ENCODE measurements at regions of chr11 and their contacts with region 1.

Region 1: GRCh38 chr11:29328961-29329441 is 687.8 kb downstream of the KCNA4 start:
- DNase-seq: peak; percentile 75
- H3K4me3 ChIP-seq: no peak overlapping the region
- H3K27ac ChIP-seq: no peak overlapping the region
- H3K4me1 ChIP-seq: peaks cover 7% of the 10 kb centered on the region
- H3K27me3 ChIP-seq: no peaks in the 10 kb centered on the region
- CTCF ChIP-seq: peak; percentile 63 to 66
- POLR2A ChIP-seq: no peak

Region 2: GRCh38 chr11:29272019-29272654 is 56.9 kb before region 1 on chr11:
- CTCF ChIA-PET with region 1: interaction called, 54 read pairs
- POLR2A ChIA-PET with region 1: no interaction called
- dilution Hi-C with region 1: no loop called
- intact Hi-C with region 1: loop called (anchors 1 kb)
- DNase-seq: peak; percentile 59
- H3K4me3 ChIP-seq: no peak overlapping the region
- H3K27ac ChIP-seq: no peak overlapping the region
- H3K4me1 ChIP-seq: no peaks in the 10 kb centered on the region
- H3K27me3 ChIP-seq: no peaks in the 10 kb centered on the region
- CTCF ChIP-seq: peak in 1 of 2 donors; percentile 54
- POLR2A ChIP-seq: no peak

Region 3: DNA sequence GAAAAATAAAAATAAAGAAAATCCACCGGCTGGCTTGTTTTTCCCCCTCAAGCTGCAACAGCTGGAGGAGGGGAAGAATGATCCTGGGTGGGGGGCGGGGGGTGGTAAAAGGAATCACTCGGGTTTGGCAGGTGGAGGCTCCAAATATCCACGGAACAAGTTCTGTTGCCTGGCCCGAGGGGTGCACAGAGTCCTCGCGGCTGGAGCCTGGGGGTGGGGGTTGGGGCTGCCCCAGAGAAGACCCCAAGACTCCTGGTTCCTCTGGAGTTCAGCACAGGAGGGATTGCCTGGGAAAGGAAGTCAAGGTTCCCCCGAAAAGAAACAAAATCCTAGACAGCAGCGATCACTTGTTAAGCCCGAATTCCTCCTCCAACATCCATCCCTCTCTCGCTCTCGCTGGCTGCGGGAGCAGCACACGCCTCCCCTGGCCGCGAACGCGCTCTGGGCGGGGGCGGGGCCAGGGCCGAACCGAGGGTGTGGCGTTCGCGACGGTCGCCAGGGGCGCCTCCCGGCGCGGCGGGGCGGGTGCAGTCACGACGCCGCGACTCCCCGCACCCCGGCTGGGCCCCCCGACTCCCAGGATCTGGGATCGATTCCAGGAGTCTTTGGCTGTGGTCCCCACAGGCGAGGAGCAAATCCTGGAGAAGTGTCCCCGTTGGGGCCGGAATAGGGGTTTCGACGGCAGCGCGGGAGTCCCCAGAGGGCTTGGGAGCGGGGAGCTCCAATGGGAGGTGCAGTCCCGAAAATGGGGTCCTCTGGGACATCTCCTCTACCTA is 687.8 kb after region 1 on chr11 and contains the start of gene KCNA4:
- CTCF ChIA-PET with region 1: no interaction called
- POLR2A ChIA-PET with region 1: no interaction called
- dilution Hi-C with region 1: no loop called
- intact Hi-C with region 1: no loop called
- DNase-seq: no peak
- H3K4me3 ChIP-seq: no peak within 1 kb of the TSS
- H3K27ac ChIP-seq: no peak within 1 kb of the TSS
- H3K4me1 ChIP-seq: no peaks in the 10 kb centered on the region
- H3K27me3 ChIP-seq: peaks cover 29 to 46% of the 10 kb centered on the region in 2 experiments
- CTCF ChIP-seq: no peak
- POLR2A ChIP-seq: no peak
- total RNA-seq, gene KCNA4: not detected in 2 replicates